ENCODE measurements at regions of chr5 and their contacts with region 1.

Region 1: GRCh38 chr5:147188200-147189108 is 46.4 kb upstream of the STK32A start:
- DNase-seq: peak; percentile 37
- ATAC-seq: peak; percentile 70
- H3K4me3 Mint-ChIP-seq: no peak overlapping the region
- H3K27ac Mint-ChIP-seq: no peak overlapping the region
- H3K4me1 Mint-ChIP-seq: peaks cover 34% of the 10 kb centered on the region
- H3K27me3 Mint-ChIP-seq: no peaks in the 10 kb centered on the region; the same call in 1 of the 2 replicates
- CTCF ChIP-seq: peak; percentile 87

Region 2: DNA sequence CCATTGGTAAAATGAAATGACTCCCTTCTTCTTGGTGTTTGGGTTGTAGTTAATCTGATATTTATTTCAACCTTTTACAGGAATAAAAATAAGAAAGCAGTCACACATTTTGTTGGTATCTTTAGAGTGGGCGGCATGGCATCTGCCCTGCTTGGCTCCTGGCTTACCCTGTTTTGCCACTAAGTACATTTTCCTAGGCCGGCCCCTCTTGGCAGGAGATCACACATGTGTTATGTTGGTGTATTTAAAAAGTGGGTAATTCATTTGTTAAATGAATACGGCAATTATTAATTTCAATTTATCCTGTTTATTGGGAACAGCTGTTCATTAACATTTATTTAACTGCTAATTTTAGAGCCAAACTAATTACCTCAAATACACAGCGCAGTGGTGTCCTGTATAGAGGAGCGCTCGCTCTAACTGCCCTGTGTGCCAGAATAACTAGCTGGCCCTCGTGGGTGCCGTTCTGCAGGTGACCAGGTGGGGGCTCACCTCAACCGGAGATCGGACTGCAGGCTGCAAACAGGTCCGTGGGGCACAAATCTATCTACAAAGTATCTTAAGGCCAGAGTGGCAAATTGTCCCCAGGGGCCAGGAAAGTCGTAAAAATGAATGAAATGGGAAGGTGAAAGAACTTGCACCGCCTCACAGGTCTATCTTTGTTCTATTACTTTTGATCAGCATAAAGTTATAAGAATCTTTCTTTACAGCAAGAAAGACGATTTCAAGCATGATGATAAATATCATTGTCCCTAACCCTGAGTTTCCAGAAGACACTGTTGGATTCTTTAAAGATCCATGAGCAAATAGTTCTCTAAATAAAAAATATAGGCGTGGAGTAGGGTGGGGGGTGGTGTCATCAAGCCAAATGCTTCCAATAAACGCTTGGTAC is 646.2 kb before region 1 on chr5:
- CTCF ChIA-PET with region 1: interaction called, 41 read pairs
- POLR2A ChIA-PET with region 1: no interaction called
- DNase-seq: peak; percentile 86
- ATAC-seq: peak; percentile 99
- H3K4me3 Mint-ChIP-seq: no peak overlapping the region
- H3K27ac Mint-ChIP-seq: no peak overlapping the region
- H3K4me1 Mint-ChIP-seq: peaks cover 8% of the 10 kb centered on the region
- H3K27me3 Mint-ChIP-seq: no peaks in the 10 kb centered on the region
- CTCF ChIP-seq: peak; percentile 86

Region 3: GRCh38 chr5:147040856-147041255 is 147.6 kb before region 1 on chr5:
- CTCF ChIA-PET with region 1: interaction called, 12 read pairs
- POLR2A ChIA-PET with region 1: no interaction called
- DNase-seq: no peak
- ATAC-seq: peak; percentile 66
- H3K4me3 Mint-ChIP-seq: no peak overlapping the region
- H3K27ac Mint-ChIP-seq: no peak overlapping the region
- H3K4me1 Mint-ChIP-seq: peaks cover 4% of the 10 kb centered on the region
- H3K27me3 Mint-ChIP-seq: no peaks in the 10 kb centered on the region
- CTCF ChIP-seq: no peak

Region 4: DNA sequence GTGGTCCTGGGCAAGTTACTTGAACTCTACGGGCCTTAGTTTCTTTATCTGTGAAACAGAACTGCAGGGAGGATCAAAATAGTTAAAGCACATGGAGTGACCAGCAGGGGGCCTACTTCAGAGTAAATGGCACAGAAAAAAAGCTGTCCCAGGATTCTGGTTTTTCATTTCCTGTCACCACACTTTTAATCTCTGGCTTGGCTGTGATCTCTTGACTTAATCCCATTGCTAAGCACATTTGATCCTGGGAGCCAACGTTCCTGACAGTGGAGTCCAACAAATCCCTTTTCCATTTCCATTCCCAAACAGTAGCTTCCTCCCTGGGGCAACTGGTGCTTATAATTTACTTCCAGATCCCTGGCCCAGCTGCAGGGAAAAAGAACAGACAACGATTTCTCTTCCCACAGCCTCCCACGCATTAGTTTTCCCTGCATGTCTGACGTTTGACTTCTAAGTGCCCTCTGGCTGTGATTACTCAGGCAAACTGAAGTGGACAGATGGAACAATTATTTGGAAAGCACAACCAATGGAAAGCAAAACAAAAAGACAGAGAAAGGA is 90.1 kb before region 1 on chr5:
- CTCF ChIA-PET with region 1: interaction called, 95 read pairs
- POLR2A ChIA-PET with region 1: no interaction called
- DNase-seq: peak; percentile 49
- ATAC-seq: peak; percentile 70
- H3K4me3 Mint-ChIP-seq: no peak overlapping the region
- H3K27ac Mint-ChIP-seq: peak overlapping the region; percentile 68; the same call in 1 of the 2 replicates
- H3K4me1 Mint-ChIP-seq: peaks cover 20% of the 10 kb centered on the region
- H3K27me3 Mint-ChIP-seq: no peaks in the 10 kb centered on the region
- CTCF ChIP-seq: peak; percentile 79

Region 5: GRCh38 chr5:147216552-147217154 is 28.2 kb after region 1 on chr5:
- CTCF ChIA-PET with region 1: interaction called, 13 read pairs
- POLR2A ChIA-PET with region 1: no interaction called
- DNase-seq: peak; percentile 22
- ATAC-seq: peak; percentile 95
- H3K4me3 Mint-ChIP-seq: no peak overlapping the region
- H3K27ac Mint-ChIP-seq: no peak overlapping the region
- H3K4me1 Mint-ChIP-seq: peaks cover 14% of the 10 kb centered on the region
- H3K27me3 Mint-ChIP-seq: no peaks in the 10 kb centered on the region; the same call in 1 of the 2 replicates
- CTCF ChIP-seq: no peak

Measured in WTC11 (cell line).